ENCODE measurements at regions of chr3 and their contacts with region 1.

Region 1: DNA sequence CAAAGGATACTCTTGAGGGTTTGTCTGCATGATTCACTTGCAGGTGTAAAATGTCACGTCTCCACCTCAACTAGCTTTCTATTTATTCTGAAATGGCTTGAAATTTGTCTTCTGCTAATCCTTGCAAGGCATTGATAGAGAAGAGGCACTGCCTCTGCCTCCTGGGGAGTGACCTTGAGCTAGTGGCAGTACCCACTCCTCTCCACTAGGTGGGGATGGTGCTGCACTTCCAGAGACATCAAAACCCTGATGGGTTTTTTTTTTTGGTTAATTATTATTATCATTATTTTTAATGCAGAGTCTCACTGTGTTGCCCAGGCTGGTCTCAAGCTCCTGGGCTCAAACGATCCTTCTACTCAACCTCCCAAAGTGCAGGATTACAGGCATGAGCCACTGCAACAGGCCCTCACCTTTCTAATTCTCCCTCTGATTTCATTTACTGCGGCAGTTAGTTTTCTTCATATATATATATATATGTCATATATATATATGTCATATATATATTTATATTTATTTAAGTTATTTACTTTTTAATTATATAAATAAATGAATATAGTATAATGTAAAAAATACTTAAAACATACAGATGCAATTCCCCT is 117.6 kb upstream of the EIF1B start:
- DNase-seq: peak; percentile 10
- H3K4me3 ChIP-seq: no peak overlapping the region
- H3K27ac ChIP-seq: no peak overlapping the region
- H3K27me3 ChIP-seq: no peaks in the 10 kb centered on the region
- CTCF ChIP-seq: peak; percentile 95

Region 2: DNA sequence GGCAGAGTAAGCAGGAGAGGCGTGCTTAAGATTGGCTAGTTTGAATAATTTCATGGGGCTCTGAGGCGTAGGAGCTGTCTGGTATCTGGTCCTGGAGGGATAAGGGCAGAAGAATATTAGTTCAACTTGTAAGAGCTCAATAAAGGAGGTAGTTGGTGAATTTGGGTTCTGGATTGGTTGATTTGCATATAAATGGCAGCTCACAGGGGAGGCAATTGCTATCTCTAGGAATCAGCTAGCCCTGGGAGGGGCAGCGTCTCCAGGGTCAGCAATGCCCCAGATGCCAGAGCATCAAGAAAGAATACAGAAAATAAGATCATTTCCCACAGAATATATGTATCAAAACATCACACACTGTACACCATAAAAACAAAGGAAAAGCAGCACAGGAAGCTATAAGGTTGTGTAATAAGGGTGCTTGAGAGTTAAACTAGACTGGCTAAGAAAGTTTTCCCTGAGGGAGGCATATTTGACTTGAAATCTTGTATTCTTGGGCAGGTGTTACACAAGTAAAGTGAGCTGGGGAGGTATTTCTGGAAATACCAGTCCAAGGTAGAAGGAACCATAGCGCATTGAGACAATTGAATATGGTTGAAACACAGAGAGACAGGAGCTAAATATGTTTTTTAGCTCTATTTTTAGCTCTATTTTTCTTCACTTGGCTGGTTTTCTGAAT is 718.4 kb before region 1 on chr3:
- CTCF ChIA-PET with region 1: no interaction called
- POLR2A ChIA-PET with region 1: no interaction called
- DNase-seq: no peak
- H3K4me3 ChIP-seq: no peak overlapping the region
- H3K27ac ChIP-seq: no peak overlapping the region
- H3K27me3 ChIP-seq: no peaks in the 10 kb centered on the region
- CTCF ChIP-seq: no peak

Region 3: GRCh38 chr3:40179016-40179415 is 12.9 kb before region 1 on chr3:
- CTCF ChIA-PET with region 1: interaction called, 76 read pairs
- POLR2A ChIA-PET with region 1: no interaction called
- DNase-seq: peak; percentile 27
- H3K4me3 ChIP-seq: no peak overlapping the region
- H3K27ac ChIP-seq: no peak overlapping the region
- H3K27me3 ChIP-seq: no peaks in the 10 kb centered on the region
- CTCF ChIP-seq: peak; percentile 77

Region 4: GRCh38 chr3:40232626-40233025 is 40.7 kb after region 1 on chr3:
- CTCF ChIA-PET with region 1: interaction called, 10 read pairs
- POLR2A ChIA-PET with region 1: no interaction called
- DNase-seq: no peak
- H3K4me3 ChIP-seq: no peak overlapping the region
- H3K27ac ChIP-seq: no peak overlapping the region
- H3K27me3 ChIP-seq: no peaks in the 10 kb centered on the region
- CTCF ChIP-seq: no peak

Region 5: DNA sequence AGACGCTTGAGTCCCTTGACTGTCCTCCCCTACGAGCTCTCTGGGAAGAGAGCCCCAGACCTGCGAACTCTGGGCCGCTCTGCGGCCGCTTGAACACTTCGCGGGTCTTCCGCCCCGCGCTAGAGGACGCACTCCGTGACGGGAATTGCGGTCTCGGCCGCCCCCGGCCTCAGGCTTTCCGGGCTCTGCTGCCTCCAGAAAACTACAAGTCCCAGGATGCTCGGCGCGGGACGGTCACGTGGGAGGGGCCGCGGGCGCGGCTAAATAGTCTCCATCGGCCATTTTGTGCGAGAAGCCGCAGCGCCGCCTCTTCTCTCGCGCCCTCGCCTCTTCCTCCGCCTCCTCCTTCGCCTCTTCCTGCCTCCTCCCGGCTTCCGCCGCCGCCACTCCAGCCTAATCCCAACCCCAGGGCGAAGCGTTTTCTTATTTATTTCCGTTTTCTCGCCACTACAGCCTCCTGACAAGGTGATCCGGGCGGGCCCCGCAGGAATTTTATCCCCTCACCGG is 117.5 kb after region 1 on chr3 and contains the start of gene EIF1B:
- CTCF ChIA-PET with region 1: interaction called, 333 read pairs
- POLR2A ChIA-PET with region 1: no interaction called
- DNase-seq: peak; percentile 93
- H3K4me3 ChIP-seq: peak within 1 kb of the TSS; percentile 84
- H3K27ac ChIP-seq: peak within 1 kb of the TSS; percentile 92
- H3K27me3 ChIP-seq: no peaks in the 10 kb centered on the region
- CTCF ChIP-seq: peak; percentile 93
- polyA plus RNA-seq, gene EIF1B: 35.9 and 46.7 TPM in 2 replicates

Region 6: GRCh38 chr3:40329071-40329470 is 137.1 kb after region 1 on chr3:
- CTCF ChIA-PET with region 1: interaction called, 13 read pairs
- POLR2A ChIA-PET with region 1: no interaction called
- DNase-seq: no peak
- H3K4me3 ChIP-seq: no peak overlapping the region
- H3K27ac ChIP-seq: no peak overlapping the region
- H3K27me3 ChIP-seq: peaks cover 5% of the 10 kb centered on the region
- CTCF ChIP-seq: no peak

Region 7: GRCh38 chr3:40645883-40646282 is 453.9 kb after region 1 on chr3:
- CTCF ChIA-PET with region 1: no interaction called
- POLR2A ChIA-PET with region 1: no interaction called
- DNase-seq: no peak
- H3K4me3 ChIP-seq: no peak overlapping the region
- H3K27ac ChIP-seq: no peak overlapping the region
- H3K27me3 ChIP-seq: no peaks in the 10 kb centered on the region
- CTCF ChIP-seq: no peak